ENCODE measurements at regions of chr15 and their contacts with region 1.

Region 1: GRCh38 chr15:83571820-83572707 is 81.9 kb upstream of the ADAMTSL3 start:
- DNase-seq: peak in 1 of 2 experiments; percentile 53
- H3K4me3 ChIP-seq: no peak overlapping the region
- H3K27ac ChIP-seq: no peak overlapping the region
- H3K4me1 ChIP-seq: no peaks in the 10 kb centered on the region
- H3K27me3 ChIP-seq: no peaks in the 10 kb centered on the region
- CTCF ChIP-seq: peak in 2 of 3 experiments; percentile 55 to 56; a peak in 3 of 4 replicates
- EP300 ChIP-seq: no peak
- POLR2A ChIP-seq: no peak
- RAD21 ChIP-seq: peak; percentile 56 to 70

Region 2: DNA sequence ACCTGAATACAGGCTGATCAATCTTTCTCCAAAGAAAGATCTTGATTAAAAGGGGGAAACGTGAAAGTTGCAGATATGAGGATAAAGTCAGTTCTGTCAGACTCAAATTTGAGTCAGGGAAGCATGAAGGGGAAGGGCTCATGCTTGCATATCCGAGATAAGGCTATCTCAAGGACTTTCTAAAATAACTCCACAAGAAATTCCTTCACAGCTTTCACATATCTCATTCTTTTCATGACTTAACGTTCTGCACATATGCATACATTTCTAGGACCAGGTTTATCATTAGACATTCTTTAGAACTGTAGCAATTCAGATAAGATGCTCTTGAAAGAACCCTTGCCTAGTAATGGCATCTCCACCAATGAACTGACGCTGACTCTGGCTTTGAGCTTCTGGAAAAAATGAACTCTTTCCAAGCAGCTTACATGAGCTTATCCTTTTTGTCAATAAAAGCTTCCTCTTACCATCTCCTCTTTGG is 109.1 kb before region 1 on chr15:
- CTCF ChIA-PET with region 1: interaction called, 10 read pairs
- POLR2A ChIA-PET with region 1: no interaction called
- DNase-seq: no peak
- H3K4me3 ChIP-seq: no peak overlapping the region
- H3K27ac ChIP-seq: no peak overlapping the region
- H3K4me1 ChIP-seq: no peaks in the 10 kb centered on the region
- H3K27me3 ChIP-seq: no peaks in the 10 kb centered on the region
- CTCF ChIP-seq: no peak
- EP300 ChIP-seq: no peak
- POLR2A ChIP-seq: no peak
- RAD21 ChIP-seq: no peak

Region 3: GRCh38 chr15:83559310-83559966 is 12.6 kb before region 1 on chr15:
- CTCF ChIA-PET with region 1: interaction called, 17 read pairs
- POLR2A ChIA-PET with region 1: no interaction called
- DNase-seq: peak; percentile 46 to 74
- H3K4me3 ChIP-seq: no peak overlapping the region
- H3K27ac ChIP-seq: no peak overlapping the region
- H3K4me1 ChIP-seq: no peaks in the 10 kb centered on the region
- H3K27me3 ChIP-seq: no peaks in the 10 kb centered on the region
- CTCF ChIP-seq: peak; percentile 54 to 94 (median 91)
- EP300 ChIP-seq: no peak; a peak in 1 of 3 replicates
- POLR2A ChIP-seq: no peak
- RAD21 ChIP-seq: peak; percentile 96 to 100

Region 4: GRCh38 chr15:83585601-83586335 is 13.7 kb after region 1 on chr15:
- CTCF ChIA-PET with region 1: interaction called, 16 read pairs
- POLR2A ChIA-PET with region 1: interaction called, 3 read pairs
- DNase-seq: no peak
- H3K4me3 ChIP-seq: no peak overlapping the region
- H3K27ac ChIP-seq: no peak overlapping the region
- H3K4me1 ChIP-seq: no peaks in the 10 kb centered on the region; a peak in 1 of 7 replicates
- H3K27me3 ChIP-seq: no peaks in the 10 kb centered on the region
- CTCF ChIP-seq: no peak
- EP300 ChIP-seq: no peak
- POLR2A ChIP-seq: no peak
- RAD21 ChIP-seq: no peak

Region 5: DNA sequence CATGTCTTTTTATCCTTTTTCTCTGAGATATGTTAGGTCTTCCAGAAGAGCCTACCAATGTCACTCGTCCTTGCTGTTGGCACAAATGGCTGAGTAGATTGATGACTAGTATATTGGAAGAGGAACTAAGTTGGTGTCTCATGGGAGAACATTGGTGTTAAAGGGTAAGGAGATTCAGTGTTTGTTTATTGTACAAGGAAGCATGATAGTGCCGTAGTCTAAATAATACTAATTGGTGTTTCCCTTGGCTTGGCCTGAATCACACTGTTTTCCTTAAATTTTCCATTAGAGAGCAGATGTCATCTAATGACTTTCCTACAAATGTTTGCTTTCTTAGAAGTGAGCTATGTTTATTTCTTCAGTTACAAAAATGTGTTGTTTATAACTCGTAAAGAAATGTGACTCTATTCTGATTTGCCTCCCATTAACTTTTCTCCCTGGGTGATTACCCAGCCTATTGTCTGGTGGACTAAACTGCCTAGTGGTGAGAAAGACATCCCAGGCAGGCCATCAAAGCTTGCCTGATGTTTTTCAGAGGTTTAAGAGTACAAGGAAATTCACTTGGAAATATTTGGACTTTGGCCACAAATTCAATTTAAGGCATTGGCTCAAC is 110.5 kb after region 1 on chr15:
- CTCF ChIA-PET with region 1: no interaction called
- POLR2A ChIA-PET with region 1: no interaction called
- DNase-seq: no peak
- H3K4me3 ChIP-seq: no peak overlapping the region
- H3K27ac ChIP-seq: no peak overlapping the region
- H3K4me1 ChIP-seq: no peaks in the 10 kb centered on the region
- H3K27me3 ChIP-seq: no peaks in the 10 kb centered on the region
- CTCF ChIP-seq: no peak
- EP300 ChIP-seq: no peak
- POLR2A ChIP-seq: no peak
- RAD21 ChIP-seq: no peak

Region 6: GRCh38 chr15:83762367-83762766 is 190.3 kb after region 1 on chr15:
- CTCF ChIA-PET with region 1: no interaction called
- POLR2A ChIA-PET with region 1: no interaction called
- DNase-seq: no peak
- H3K4me3 ChIP-seq: no peak overlapping the region
- H3K27ac ChIP-seq: no peak overlapping the region
- H3K4me1 ChIP-seq: no peaks in the 10 kb centered on the region
- H3K27me3 ChIP-seq: no peaks in the 10 kb centered on the region
- CTCF ChIP-seq: no peak
- EP300 ChIP-seq: no peak
- POLR2A ChIP-seq: no peak
- RAD21 ChIP-seq: no peak

Region 7: GRCh38 chr15:83810110-83810509 is 238.0 kb after region 1 on chr15:
- CTCF ChIA-PET with region 1: no interaction called
- POLR2A ChIA-PET with region 1: no interaction called
- DNase-seq: no peak
- H3K4me3 ChIP-seq: no peak overlapping the region
- H3K27ac ChIP-seq: no peak overlapping the region
- H3K4me1 ChIP-seq: no peaks in the 10 kb centered on the region
- H3K27me3 ChIP-seq: no peaks in the 10 kb centered on the region
- CTCF ChIP-seq: no peak
- EP300 ChIP-seq: no peak
- POLR2A ChIP-seq: no peak
- RAD21 ChIP-seq: no peak